Right cardiac atrium (tissue), 5 donors: ENCODE measurements at regions of chr18 and their contacts with region 1.

Region 1: DNA sequence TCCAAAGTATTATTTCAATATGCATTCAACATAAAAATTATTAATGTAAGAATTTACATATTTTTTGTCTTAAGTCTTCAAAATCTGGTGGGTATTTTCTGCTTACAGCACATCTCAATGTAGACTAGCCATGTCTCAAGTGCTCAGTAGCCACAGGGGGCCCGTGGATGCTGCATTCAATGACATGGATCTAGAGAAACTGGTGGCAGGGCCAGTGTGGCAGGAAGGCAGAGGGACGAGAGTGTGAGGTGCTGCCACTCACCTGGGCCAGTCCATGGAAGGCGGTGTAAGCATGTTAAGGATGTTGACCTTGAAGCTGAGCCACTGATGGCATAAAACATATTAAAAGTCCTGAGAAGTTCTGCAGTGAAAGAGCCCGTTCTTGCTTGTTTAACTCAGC is 6.2 kb upstream of the LIPG start:
- DNase-seq: no peak
- ATAC-seq: no peak
- H3K4me3 ChIP-seq: no peak overlapping the region
- H3K27ac ChIP-seq: no peak overlapping the region
- H3K4me1 ChIP-seq: no peaks in the 10 kb centered on the region
- H3K27me3 ChIP-seq: no peaks in the 10 kb centered on the region

Region 2: DNA sequence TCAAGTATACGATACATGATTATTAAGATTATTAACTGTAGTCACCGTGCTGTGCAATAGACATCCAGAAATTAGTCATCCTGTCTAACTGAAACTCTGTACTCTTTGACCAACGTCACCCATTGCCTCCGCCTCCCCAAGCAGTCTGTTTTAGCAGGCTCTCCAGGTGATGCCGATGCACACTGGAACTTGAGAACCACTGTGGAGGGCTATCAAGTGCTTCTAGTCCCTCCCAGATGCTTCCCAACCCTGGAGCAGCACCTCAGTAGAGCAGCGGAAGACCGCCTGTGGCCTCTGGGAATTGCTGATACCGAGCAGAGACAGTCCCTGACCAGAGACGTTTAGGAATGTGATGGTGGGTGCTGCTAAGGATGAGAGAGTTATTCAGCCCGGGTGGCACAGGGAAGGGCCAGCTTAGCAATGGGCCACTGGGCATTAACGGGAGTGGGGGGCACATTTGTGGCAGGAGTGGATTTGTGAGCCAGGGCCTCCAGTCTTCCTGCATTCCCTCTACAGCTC is 56.9 kb after region 1 on chr18:
- intact Hi-C with region 1: no loop called
- DNase-seq: no peak
- ATAC-seq: no peak
- H3K4me3 ChIP-seq: no peak overlapping the region
- H3K27ac ChIP-seq: no peak overlapping the region
- H3K4me1 ChIP-seq: no peaks in the 10 kb centered on the region
- H3K27me3 ChIP-seq: no peaks in the 10 kb centered on the region

Region 3: DNA sequence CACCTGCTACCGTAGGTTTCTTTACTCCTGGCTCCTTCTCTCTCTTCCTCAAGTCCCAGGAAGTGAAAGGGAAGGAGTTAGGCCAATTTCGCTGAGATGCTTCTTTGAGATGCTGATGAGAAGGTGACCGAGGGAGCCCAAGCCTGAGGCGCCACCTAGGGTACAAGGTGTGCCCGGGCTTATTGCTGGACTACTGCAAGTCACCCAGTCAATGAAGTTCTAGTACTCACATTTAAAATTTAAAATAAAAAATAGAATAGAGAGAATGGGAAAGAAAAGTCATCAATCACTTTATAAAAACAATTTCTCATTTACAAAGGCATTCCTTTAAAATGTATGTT is 212.4 kb after region 1 on chr18:
- intact Hi-C with region 1: loop called in 1 of 4 experiments (anchors 5 kb)
- DNase-seq: peak; percentile 37 to 75 (median 74)
- ATAC-seq: peak; percentile 60 to 66
- H3K4me3 ChIP-seq: no peak overlapping the region
- H3K27ac ChIP-seq: no peak overlapping the region
- H3K4me1 ChIP-seq: no peaks in the 10 kb centered on the region
- H3K27me3 ChIP-seq: no peaks in the 10 kb centered on the region